Ascending aorta (tissue), 2 donors: ENCODE measurements at regions of chr7 and their contacts with region 1.

Region 1: GRCh38 chr7:96709381-96710228 is at the start of gene SEM1:
- DNase-seq: peak; percentile 16 to 91
- H3K4me3 ChIP-seq: peak within 1 kb of the TSS; percentile 75 to 97
- H3K27ac ChIP-seq: peak within 1 kb of the TSS; percentile 89 to 92
- H3K4me1 ChIP-seq: peaks cover 4 to 10% of the 10 kb centered on the region in 2 donors
- H3K27me3 ChIP-seq: no peaks in the 10 kb centered on the region
- CTCF ChIP-seq: no peak
- total RNA-seq, gene SEM1: 0.43 TPM

Region 2: GRCh38 chr7:97117372-97118188 is 408.0 kb after region 1 on chr7 and contains the start of gene SDHAF3:
- intact Hi-C with region 1: loop called (anchors 2 kb)
- DNase-seq: peak; percentile 77 to 98
- H3K4me3 ChIP-seq: peak within 1 kb of the TSS; percentile 58 to 75
- H3K27ac ChIP-seq: peak within 1 kb of the TSS; percentile 65 to 74
- H3K4me1 ChIP-seq: no peaks in the 10 kb centered on the region
- H3K27me3 ChIP-seq: no peaks in the 10 kb centered on the region
- CTCF ChIP-seq: peak in 1 of 3 experiments; percentile 17
- total RNA-seq, gene SDHAF3: not detected